Cardiac septum (tissue), 1 donor: ENCODE measurements at regions of chr9 and their contacts with region 1.

Region 1: GRCh38 chr9:94952565-94953373 is 226.3 kb downstream of the AOPEP start:
- DNase-seq: no peak

Region 2: DNA sequence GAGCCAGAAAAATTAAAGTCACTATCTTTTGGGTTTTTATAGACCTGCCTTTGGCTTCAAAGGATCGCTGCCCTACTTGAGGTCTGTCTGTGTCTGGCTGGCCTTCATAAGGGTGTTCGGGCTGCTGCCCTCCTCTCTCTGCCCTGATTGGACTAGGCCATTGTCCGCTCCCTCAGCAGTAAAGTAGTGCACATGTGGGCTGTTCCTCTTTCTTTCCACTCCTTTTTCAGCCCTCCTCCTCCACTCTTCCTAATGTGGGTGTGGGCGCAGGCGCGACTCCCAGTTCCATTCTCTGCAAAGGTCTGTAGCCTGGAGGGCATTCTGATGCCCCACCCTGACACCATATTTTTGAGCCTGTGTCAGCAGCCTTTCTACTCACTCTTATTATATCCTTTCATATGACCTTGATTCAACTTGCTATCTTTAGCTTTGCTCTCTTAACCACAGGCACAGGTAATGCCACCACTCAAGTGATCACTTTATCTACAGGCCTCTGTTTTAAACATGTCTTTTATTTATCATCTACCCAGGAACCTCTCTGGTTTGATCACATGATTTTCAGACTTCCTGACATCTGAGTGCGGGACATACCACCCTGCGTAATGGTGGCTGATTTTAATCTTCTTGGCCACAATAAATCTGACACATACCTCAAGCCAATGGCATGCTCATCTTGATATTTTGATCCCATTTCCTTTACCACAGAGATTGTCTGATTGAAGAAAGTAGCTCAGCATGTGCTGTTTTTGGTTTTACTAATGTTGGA is 81.8 kb before region 1 on chr9:
- intact Hi-C with region 1: loop called (anchors 2 kb)
- DNase-seq: peak; percentile 87

Region 3: DNA sequence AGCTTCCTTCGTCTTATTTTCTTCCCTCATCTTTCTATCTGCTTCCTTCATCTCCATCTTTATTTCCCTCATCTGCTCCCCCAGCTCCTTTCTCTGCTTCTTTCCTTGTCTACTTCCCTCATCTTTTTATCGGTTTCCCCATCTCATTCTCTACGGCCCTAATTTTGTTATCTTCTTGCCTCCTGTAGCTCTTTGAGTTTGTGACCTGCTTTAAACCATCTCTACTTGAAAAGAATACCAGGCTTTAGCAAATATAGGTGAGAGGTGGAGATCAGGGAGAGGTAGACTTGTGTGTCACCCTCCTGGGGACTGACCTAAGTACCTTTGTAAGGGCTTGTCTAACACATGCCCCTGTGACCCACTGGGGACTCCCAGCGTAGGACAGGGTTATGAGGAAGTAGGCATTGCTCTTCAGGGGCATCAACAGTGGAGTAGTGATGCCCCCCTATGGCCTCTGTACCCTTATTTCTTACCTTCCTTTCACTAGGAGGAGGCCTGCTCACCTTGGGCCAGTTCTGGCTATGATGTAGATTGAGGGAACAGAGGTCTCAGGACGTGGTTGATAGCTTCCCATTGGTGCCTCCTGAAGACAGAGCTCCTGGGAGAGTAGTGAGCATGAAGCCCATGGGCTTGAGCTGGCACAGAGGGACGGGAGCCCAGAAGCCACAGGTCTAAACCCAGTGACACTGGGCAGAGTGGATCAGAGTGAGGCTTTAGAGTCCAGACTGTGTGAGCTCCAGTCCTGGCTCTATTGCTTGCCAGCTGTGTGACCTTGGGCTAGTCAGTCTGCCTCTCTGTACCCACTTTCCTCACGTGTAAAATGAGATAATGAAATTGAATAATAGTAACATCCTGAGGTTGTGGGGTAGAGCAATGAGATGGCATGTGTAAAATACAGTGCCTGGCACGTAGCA is 34.7 kb before region 1 on chr9:
- intact Hi-C with region 1: loop called (anchors 5 kb)
- DNase-seq: no peak

Region 4: DNA sequence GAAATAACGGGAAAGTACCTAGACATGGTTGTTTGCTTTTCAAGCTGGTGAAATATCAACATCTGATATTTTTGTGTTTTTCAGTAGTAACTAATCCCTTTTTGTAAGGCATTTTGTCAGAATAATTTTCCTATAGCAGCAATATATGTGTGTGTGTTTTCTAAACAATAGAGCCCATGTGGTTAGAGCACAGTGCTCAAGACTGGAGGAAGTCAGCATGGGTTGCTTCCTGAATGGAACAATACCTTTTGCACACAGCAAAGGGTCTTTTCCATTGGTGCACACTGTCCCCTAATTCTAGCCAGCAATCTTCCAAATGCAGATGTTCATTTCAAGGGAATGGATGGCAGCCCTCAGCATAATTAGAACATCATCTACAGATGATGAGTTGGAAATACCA is 43.9 kb after region 1 on chr9:
- intact Hi-C with region 1: loop called (anchors 2 kb)
- DNase-seq: no peak